ENCODE measurements at regions of chr19 and their contacts with region 1.

Region 1: GRCh38 chr19:58408152-58409009 is at the start of gene ZNF584:
- DNase-seq: peak; percentile 96
- H3K4me3 Mint-ChIP-seq: peak within 1 kb of the TSS; percentile 81
- H3K27ac Mint-ChIP-seq: peak within 1 kb of the TSS; percentile 95
- H3K4me1 Mint-ChIP-seq: peaks cover 26% of the 10 kb centered on the region
- H3K27me3 Mint-ChIP-seq: no peaks in the 10 kb centered on the region
- CTCF ChIP-seq: no peak
- total RNA-seq, gene ZNF584: 14.6 and 18.1 TPM in 2 replicates

Region 2: DNA sequence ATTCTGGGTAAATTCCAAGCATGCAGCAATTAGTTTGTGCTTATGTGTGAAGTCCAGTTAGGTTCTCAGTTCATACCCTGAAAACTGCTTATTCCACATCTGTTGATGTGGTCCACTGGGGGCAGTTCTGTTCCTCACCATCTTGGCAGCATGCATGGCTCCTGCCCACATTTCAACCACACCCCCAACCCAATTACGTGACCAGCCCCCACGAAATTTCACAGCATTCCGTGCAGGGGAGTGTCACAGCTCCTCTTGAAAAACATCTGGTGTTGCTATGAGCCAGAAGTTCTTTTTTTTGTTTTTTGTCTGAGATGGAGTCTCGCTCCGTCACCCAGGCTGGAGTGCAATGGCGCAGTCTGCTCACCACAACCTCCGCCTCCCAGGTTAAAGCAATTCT is 112.3 kb before region 1 on chr19:
- CTCF ChIA-PET with region 1: no interaction called
- POLR2A ChIA-PET with region 1: no interaction called
- intact Hi-C with region 1: no loop called
- DNase-seq: no peak
- H3K4me3 Mint-ChIP-seq: no peak overlapping the region
- H3K27ac Mint-ChIP-seq: no peak overlapping the region
- H3K4me1 Mint-ChIP-seq: no peaks in the 10 kb centered on the region
- H3K27me3 Mint-ChIP-seq: no peaks in the 10 kb centered on the region
- CTCF ChIP-seq: no peak

Region 3: DNA sequence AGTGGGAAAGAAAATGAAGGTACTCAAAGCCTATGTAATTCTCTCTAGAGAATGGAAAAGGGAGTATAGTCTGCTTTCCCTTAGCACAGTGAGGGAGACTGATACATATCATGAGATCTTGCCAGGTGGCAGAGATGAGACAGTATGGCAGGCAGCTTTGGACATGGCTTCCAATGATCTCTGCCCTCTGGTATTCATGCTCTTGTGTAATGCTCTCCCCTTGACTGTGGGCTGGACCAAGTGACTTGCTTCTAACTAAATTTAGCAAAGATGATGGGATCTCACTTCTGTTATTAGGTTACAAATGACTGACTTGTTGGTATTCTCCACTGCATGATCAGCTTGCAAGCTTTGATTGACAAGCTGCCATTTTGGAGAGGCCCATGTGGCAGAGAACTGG is 21.4 kb after region 1 on chr19:
- CTCF ChIA-PET with region 1: no interaction called
- POLR2A ChIA-PET with region 1: interaction called, 12 read pairs
- intact Hi-C with region 1: no loop called
- DNase-seq: no peak
- H3K4me3 Mint-ChIP-seq: no peak overlapping the region
- H3K27ac Mint-ChIP-seq: no peak overlapping the region
- H3K4me1 Mint-ChIP-seq: no peaks in the 10 kb centered on the region
- H3K27me3 Mint-ChIP-seq: no peaks in the 10 kb centered on the region
- CTCF ChIP-seq: no peak

Region 4: GRCh38 chr19:58451358-58452101 is 43.1 kb after region 1 on chr19 and contains the start of gene ZNF324B:
- CTCF ChIA-PET with region 1: no interaction called
- POLR2A ChIA-PET with region 1: interaction called, 24 read pairs
- intact Hi-C with region 1: loop called (anchors 5 kb)
- DNase-seq: peak; percentile 98
- H3K4me3 Mint-ChIP-seq: peak within 1 kb of the TSS; percentile 93
- H3K27ac Mint-ChIP-seq: peak within 1 kb of the TSS; percentile 31
- H3K4me1 Mint-ChIP-seq: peaks cover 20% of the 10 kb centered on the region
- H3K27me3 Mint-ChIP-seq: no peaks in the 10 kb centered on the region
- CTCF ChIP-seq: no peak
- total RNA-seq, gene ZNF324B: 4.7 and 7.2 TPM in 2 replicates

Region 5: GRCh38 chr19:58466760-58467589 is 58.6 kb after region 1 on chr19 and contains the start of gene ZNF324:
- CTCF ChIA-PET with region 1: no interaction called
- POLR2A ChIA-PET with region 1: interaction called, 7 read pairs
- intact Hi-C with region 1: loop called (anchors 1 kb)
- DNase-seq: peak; percentile 98
- H3K4me3 Mint-ChIP-seq: peak within 1 kb of the TSS; percentile 82
- H3K27ac Mint-ChIP-seq: peak within 1 kb of the TSS; percentile 78
- H3K4me1 Mint-ChIP-seq: peaks cover 13% of the 10 kb centered on the region
- H3K27me3 Mint-ChIP-seq: no peaks in the 10 kb centered on the region
- CTCF ChIP-seq: no peak
- total RNA-seq, gene ZNF324: 6.5 and 7.9 TPM in 2 replicates

Region 6: DNA sequence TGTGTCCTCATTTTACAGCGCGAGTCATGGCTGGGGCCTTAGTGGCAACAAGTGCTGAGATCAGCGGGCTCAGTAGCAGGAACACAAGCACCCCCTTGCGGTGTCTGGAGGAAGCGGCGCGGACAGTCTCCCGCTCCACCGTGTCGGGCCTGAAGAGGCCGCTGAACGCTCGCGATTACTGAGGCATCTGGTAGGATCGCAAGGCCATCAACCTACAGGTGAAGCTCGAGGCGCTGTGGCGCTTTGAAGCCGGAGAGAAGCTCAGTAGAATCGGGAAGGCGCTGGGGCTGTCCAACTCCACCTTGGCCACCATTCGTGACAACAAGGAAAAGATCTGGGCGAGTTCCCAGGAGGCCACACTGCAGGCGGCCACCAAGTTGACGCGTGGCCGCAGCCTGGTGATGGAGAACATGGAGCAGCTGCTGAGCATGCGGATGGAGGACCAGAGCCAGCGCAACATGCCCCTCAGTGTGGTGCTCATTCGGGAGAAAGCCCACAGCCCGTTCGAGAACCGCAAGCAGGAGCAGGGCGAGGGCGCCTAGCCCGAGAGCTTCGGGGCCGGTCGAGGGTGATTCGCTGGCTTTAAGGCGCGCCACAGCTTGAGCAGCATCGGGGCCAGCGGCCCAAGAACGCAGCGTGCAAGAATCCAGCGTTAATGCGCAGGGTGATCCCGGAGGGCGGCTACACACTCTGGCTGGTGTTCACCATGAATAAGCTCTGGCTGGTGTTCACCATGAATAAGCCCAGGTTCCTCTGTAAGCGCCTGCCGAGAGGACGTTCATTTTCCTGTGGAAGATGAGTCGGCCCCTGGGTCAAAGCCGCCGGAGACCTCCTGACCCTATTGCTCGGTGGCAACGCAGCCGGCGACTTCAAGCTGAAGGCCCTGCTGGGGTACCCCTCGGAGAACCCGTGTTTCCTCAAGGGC is 173.1 kb after region 1 on chr19:
- CTCF ChIA-PET with region 1: no interaction called
- POLR2A ChIA-PET with region 1: no interaction called
- intact Hi-C with region 1: no loop called
- DNase-seq: peak; percentile 55
- H3K4me3 Mint-ChIP-seq: no peak overlapping the region
- H3K27ac Mint-ChIP-seq: no peak overlapping the region
- H3K4me1 Mint-ChIP-seq: peaks cover 15% of the 10 kb centered on the region
- H3K27me3 Mint-ChIP-seq: no peaks in the 10 kb centered on the region
- CTCF ChIP-seq: peak; percentile 75